Activated naive CD4-positive, alpha-beta T cell treated with anti-CD3 and anti-CD28 coated beads for 36 hours (primary cell): ENCODE measurements at regions of chr1 and their contacts with region 1.

Region 1: DNA sequence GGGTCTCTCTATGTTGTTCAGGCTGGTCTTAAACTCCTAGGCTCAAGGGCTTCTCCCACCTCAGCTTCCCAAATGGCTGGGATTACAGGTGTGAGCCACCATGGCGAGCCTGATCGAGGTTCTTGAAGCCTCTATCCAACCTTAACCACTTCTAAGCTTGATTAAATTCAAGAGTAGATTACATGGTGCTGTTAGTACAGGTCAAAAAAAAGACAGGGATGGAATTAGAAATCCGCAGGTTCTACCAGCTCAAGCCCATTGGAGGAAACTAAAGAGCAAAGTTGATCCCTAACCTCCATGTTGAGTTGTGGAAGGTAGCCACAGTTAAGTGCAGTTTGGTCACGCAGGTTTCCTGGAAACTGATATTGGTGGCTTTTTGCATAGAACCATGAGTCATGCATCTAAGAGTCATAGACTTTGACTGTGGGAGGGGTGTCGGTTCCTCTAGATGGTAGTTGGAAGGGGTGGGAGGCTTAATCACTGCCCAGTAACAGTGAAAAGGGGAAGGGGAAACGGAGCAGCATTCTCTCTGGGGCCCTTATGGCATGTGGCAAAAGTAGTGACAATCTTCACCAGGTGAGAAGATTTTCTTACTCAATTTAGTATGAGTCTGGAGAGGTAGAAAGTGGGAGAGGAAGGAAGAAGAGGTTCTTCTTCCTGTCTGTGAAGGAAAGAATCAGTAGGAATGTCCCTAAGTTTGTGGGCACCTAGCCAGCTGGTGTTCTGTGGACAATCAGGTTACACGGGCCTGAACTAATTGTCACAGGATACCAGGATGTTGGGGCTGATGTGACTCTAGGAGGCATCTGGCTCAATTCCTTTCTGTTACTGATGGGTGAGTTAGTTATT is 7.0 kb downstream of the CD53 start:
- DNase-seq: peak; percentile 88
- H3K4me3 Mint-ChIP-seq: peak overlapping the region; percentile 58
- H3K27ac Mint-ChIP-seq: peak overlapping the region; percentile 99
- H3K4me1 Mint-ChIP-seq: peaks cover 69% of the 10 kb centered on the region
- H3K27me3 Mint-ChIP-seq: no peaks in the 10 kb centered on the region

Region 2: GRCh38 chr1:110235834-110236682 is 643.9 kb before region 1 on chr1:
- CTCF ChIA-PET with region 1: no interaction called
- intact Hi-C with region 1: loop called (anchors 2 kb)
- DNase-seq: peak; percentile 84
- H3K4me3 Mint-ChIP-seq: no peak overlapping the region
- H3K27ac Mint-ChIP-seq: peak overlapping the region; percentile 89
- H3K4me1 Mint-ChIP-seq: peaks cover 55% of the 10 kb centered on the region
- H3K27me3 Mint-ChIP-seq: no peaks in the 10 kb centered on the region

Region 3: GRCh38 chr1:110645821-110646735 is 233.9 kb before region 1 on chr1:
- CTCF ChIA-PET with region 1: no interaction called
- intact Hi-C with region 1: loop called (anchors 1 kb)
- DNase-seq: no peak
- H3K4me3 Mint-ChIP-seq: peak overlapping the region; percentile 28
- H3K27ac Mint-ChIP-seq: no peak overlapping the region
- H3K4me1 Mint-ChIP-seq: peaks cover 55% of the 10 kb centered on the region
- H3K27me3 Mint-ChIP-seq: no peaks in the 10 kb centered on the region

Region 4: GRCh38 chr1:110963691-110964399 is 83.9 kb after region 1 on chr1 and contains the start of gene LRIF1:
- CTCF ChIA-PET with region 1: interaction called, 5 read pairs
- intact Hi-C with region 1: loop called (anchors 1 kb)
- DNase-seq: peak; percentile 100
- H3K4me3 Mint-ChIP-seq: peak within 1 kb of the TSS; percentile 83
- H3K27ac Mint-ChIP-seq: peak within 1 kb of the TSS; percentile 96
- H3K4me1 Mint-ChIP-seq: peaks cover 34% of the 10 kb centered on the region
- H3K27me3 Mint-ChIP-seq: peaks cover 8% of the 10 kb centered on the region
- total RNA-seq, gene LRIF1: 12.0 to 12.3 TPM

Region 5: GRCh38 chr1:111214074-111214801 is 334.3 kb after region 1 on chr1:
- CTCF ChIA-PET with region 1: no interaction called
- intact Hi-C with region 1: loop called (anchors 1 kb)
- DNase-seq: peak; percentile 58
- H3K4me3 Mint-ChIP-seq: peak overlapping the region; percentile 75
- H3K27ac Mint-ChIP-seq: peak overlapping the region; percentile 99
- H3K4me1 Mint-ChIP-seq: peaks cover 82% of the 10 kb centered on the region
- H3K27me3 Mint-ChIP-seq: no peaks in the 10 kb centered on the region

Region 6: DNA sequence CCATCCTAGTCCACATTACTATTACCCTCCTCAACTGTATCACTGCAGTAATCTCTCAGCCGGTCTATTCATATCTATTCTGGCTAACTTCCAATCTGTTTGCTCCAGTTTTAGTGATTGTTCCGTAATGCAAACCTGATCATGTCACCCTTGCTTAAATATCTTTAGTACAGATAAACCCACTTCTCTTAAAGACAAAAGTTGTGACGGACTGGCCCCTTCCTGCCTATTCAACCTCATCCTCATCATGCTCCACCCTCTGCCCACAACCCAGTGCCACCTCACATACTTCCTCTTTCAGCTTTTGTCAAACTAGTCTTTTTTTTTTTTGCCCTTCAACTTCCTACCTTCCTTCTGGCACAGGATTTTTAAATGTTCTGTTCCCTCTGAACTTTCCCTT is 591.0 kb after region 1 on chr1:
- CTCF ChIA-PET with region 1: no interaction called
- intact Hi-C with region 1: loop called (anchors 5 kb)
- DNase-seq: peak; percentile 88
- H3K4me3 Mint-ChIP-seq: no peak overlapping the region
- H3K27ac Mint-ChIP-seq: no peak overlapping the region
- H3K4me1 Mint-ChIP-seq: peaks cover 24% of the 10 kb centered on the region
- H3K27me3 Mint-ChIP-seq: no peaks in the 10 kb centered on the region